Caco-2 (cell line): ENCODE measurements at regions of chr2 and their contacts with region 1.

Region 1: DNA sequence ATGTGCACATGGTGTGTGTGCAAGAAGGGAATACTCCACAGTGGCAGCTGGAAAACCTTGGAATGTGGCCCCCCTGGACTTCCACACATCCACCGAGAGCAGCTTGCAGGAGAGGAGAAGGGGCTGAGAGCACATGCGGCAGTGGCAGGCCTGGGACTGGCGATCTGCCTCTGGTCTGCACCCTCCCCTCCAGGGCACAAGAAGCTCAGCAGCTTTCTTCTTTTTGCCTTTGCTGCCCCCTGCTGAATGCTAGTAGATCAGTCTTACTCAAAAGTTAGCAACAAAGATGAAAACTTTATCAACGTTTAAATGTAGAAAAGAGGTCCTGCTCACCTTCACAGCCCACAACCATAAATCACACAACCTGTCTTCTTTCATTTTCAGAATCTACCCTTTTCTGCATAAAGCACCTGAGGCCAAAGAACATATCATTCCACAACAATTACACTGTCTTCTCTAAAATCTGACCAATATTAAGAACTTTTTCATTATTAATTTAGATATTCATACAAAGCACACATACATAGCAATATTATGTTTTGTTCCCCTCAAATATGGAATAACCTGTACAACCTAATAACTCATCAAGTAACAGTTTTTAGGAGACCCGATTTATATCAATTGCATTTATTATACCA is 34.6 kb downstream of the TGFBRAP1 start:
- DNase-seq: peak; percentile 63 to 69
- H3K4me3 ChIP-seq: no peak overlapping the region
- H3K4me3 Mint-ChIP-seq: no peak overlapping the region
- H3K27ac Mint-ChIP-seq: no peak overlapping the region
- H3K4me1 ChIP-seq: no peaks in the 10 kb centered on the region
- H3K4me1 Mint-ChIP-seq: peaks cover 6% of the 10 kb centered on the region
- H3K27me3 ChIP-seq: no peaks in the 10 kb centered on the region
- H3K27me3 Mint-ChIP-seq: no peaks in the 10 kb centered on the region
- CTCF ChIP-seq: peak; percentile 50 to 71

Region 2: GRCh38 chr2:104388296-104388695 is 906.7 kb before region 1 on chr2:
- CTCF ChIA-PET with region 1: no interaction called
- POLR2A ChIA-PET with region 1: no interaction called
- intact Hi-C with region 1: no loop called
- DNase-seq: no peak
- H3K4me3 ChIP-seq: no peak overlapping the region
- H3K4me3 Mint-ChIP-seq: no peak overlapping the region
- H3K27ac Mint-ChIP-seq: no peak overlapping the region
- H3K4me1 ChIP-seq: no peaks in the 10 kb centered on the region
- H3K4me1 Mint-ChIP-seq: no peaks in the 10 kb centered on the region
- H3K27me3 ChIP-seq: no peaks in the 10 kb centered on the region; the same call in none of the 2 replicates
- H3K27me3 Mint-ChIP-seq: peaks cover 19% of the 10 kb centered on the region
- CTCF ChIP-seq: no peak

Region 3: DNA sequence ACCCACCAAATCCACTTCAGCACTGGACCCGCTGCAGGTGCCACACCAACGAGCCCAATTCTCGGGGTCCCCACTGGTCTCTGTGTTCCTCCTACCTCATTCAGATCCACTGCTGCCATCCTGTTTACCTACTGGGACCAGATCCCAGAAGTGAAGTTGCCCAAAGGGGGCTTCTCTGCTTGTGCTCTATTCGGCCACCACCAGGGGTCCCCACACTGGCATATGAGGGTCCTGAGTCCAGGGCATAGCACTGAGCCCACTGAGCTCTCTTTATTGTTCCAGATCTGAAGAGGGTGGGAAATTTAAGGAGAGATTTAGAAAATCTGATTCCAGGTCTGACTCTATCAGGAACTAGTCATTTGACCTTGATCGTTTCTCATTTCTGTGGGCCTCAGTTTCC is 51.0 kb before region 1 on chr2:
- CTCF ChIA-PET with region 1: interaction called, 4 read pairs
- POLR2A ChIA-PET with region 1: no interaction called
- intact Hi-C with region 1: loop called (anchors 2 kb)
- DNase-seq: peak in 1 of 2 experiments; percentile 19
- H3K4me3 ChIP-seq: no peak overlapping the region
- H3K4me3 Mint-ChIP-seq: no peak overlapping the region
- H3K27ac Mint-ChIP-seq: no peak overlapping the region
- H3K4me1 ChIP-seq: no peaks in the 10 kb centered on the region; the same call in 1 of the 2 replicates
- H3K4me1 Mint-ChIP-seq: no peaks in the 10 kb centered on the region
- H3K27me3 ChIP-seq: no peaks in the 10 kb centered on the region
- H3K27me3 Mint-ChIP-seq: peaks cover 3% of the 10 kb centered on the region
- CTCF ChIP-seq: peak in 1 of 2 experiments; percentile 37